Cardiac septum (tissue), 1 donor: ENCODE measurements at regions of chr7 and their contacts with region 1.

Region 1: GRCh38 chr7:36670585-36671431 is 53.5 kb downstream of the AOAH start:
- DNase-seq: no peak

Region 2: DNA sequence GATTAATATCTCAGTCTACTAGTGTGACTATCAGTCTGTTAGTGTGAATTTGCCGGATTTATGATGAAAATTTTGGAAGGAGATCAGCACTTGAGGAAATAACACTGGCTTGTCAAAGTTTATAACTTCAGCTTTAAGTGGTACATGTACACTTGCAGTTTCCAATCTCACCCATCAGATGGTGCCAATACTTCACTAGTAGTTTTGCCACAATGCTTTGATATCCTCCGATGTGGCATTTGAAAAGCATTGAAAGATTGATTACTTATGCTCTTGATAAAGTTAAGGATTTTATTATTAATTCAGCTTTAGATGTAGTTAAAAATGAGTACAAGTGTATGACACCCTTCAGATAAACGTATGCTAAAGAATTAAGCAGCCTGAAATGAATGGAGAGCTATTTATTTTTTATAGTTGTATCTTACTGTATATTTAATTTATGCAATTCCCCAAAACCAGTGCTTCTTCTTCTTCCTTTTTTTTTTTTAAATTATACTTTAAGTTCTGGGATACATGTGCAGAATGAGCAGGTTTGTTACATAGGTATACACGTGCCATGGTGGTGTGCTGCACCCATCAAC is 183.0 kb before region 1 on chr7:
- intact Hi-C with region 1: loop called (anchors 5 kb)
- DNase-seq: no peak

Region 3: DNA sequence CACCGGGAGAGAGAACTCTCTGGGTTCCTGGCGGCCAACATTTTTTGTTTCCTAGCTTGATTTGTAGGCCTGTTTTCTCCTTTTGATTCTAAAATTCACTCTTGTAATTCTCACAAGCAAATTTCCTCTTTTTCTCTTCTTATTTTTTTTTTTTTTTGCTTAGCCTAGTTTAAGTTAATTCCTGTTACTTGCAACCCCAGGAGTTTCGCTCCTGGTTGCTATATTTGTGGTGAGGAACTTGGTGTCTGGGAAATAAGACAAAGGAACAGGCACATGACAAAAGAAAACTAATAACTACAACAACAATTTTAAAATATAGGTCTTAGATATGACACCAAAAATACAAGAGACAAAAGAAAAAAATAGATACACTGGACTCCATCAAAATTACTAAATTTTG is 46.8 kb after region 1 on chr7:
- intact Hi-C with region 1: no loop called
- DNase-seq: no peak

Region 4: DNA sequence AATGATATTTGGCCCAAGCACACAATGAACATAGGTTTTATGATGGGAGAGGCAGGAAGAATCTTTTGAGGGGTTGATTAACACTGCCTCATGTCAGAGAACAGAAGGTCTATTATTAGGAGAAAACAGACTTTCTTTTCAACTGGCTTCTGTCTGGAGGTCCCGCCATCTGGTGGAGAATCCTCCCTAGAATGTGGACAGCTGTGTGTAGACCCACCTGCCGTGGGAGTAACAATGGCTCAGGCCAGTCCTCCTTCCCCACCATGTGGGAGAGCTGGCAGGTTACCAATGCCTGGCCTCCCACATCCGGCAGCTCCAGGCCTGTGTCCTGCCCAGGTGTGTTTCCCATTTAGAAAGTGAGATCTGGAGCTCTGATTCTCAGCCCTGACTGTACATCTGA is 123.9 kb after region 1 on chr7:
- intact Hi-C with region 1: no loop called
- DNase-seq: no peak